A673 (cell line): ENCODE measurements at regions of chr22 and their contacts with region 1.

Region 1: GRCh38 chr22:32421484-32421883 is 9.4 kb upstream of the RTCB start:
- DNase-seq: no peak
- H3K4me3 ChIP-seq: no peak overlapping the region
- H3K27ac ChIP-seq: no peak overlapping the region
- H3K4me1 ChIP-seq: peaks cover under 1% of the 10 kb centered on the region
- H3K27me3 ChIP-seq: peaks cover 31% of the 10 kb centered on the region
- CTCF ChIP-seq: no peak

Region 2: DNA sequence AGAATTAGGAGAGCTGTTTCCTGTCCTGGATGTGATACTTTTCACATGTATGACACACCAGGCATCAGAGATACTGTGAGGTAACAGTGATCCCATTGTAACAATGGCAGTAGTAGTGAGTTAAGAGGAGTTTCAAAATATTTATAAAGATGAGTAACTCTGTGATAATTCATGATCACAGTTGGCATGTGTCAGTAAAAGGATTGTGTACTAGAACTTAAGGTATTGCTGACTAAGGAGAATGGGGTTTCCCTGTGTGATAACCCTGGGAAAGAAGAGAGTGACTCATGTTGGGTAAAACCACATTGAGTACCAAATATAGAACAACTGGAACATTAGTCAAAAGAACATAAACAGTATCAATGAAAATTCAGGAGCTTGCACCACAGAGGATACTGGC is 401.4 kb before region 1 on chr22:
- CTCF ChIA-PET with region 1: no interaction called
- POLR2A ChIA-PET with region 1: no interaction called
- intact Hi-C with region 1: no loop called
- DNase-seq: no peak
- H3K4me3 ChIP-seq: no peak overlapping the region
- H3K27ac ChIP-seq: no peak overlapping the region
- H3K4me1 ChIP-seq: no peaks in the 10 kb centered on the region
- H3K27me3 ChIP-seq: peaks cover 6% of the 10 kb centered on the region
- CTCF ChIP-seq: no peak

Region 3: DNA sequence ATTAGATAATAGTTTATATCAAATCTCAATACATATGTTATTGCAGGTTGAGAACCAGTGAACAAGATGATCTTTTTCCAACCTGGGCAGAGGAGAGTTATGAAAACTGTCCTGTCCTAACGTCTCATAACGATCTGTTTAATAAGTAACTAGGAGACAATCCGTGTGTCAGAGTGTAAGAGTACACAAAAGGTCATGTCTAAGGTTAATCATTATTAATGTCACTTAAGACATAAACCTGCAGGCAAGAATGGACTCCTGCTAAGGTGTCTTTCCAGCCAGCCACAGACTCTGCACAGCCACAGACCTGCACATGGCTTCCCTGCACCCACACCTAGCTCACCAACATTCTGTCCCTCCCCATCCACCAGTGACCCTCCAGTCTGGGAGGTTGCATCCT is 176.4 kb before region 1 on chr22:
- CTCF ChIA-PET with region 1: no interaction called
- POLR2A ChIA-PET with region 1: no interaction called
- intact Hi-C with region 1: no loop called
- DNase-seq: no peak
- H3K4me3 ChIP-seq: no peak overlapping the region
- H3K27ac ChIP-seq: no peak overlapping the region
- H3K4me1 ChIP-seq: peaks cover 2% of the 10 kb centered on the region
- H3K27me3 ChIP-seq: no peaks in the 10 kb centered on the region
- CTCF ChIP-seq: no peak

Region 4: GRCh38 chr22:32401486-32401885 is 20.0 kb before region 1 on chr22:
- CTCF ChIA-PET with region 1: interaction called, 4 read pairs
- POLR2A ChIA-PET with region 1: interaction called, 16 read pairs
- intact Hi-C with region 1: no loop called
- DNase-seq: no peak
- H3K4me3 ChIP-seq: no peak overlapping the region
- H3K27ac ChIP-seq: no peak overlapping the region
- H3K4me1 ChIP-seq: no peaks in the 10 kb centered on the region
- H3K27me3 ChIP-seq: no peaks in the 10 kb centered on the region
- CTCF ChIP-seq: no peak